H1 (cell line): ENCODE measurements at regions of chr14 and their contacts with region 1.

Region 1: GRCh38 chr14:51269634-51270033 is 29.6 kb downstream of the TMX1 start:
- DNase-seq: no peak
- H3K4me3 ChIP-seq: no peak overlapping the region
- H3K27ac ChIP-seq: no peak overlapping the region
- H3K4me1 ChIP-seq: no peaks in the 10 kb centered on the region
- H3K27me3 ChIP-seq: no peaks in the 10 kb centered on the region
- CTCF ChIP-seq: no peak
- EP300 ChIP-seq: no peak
- POLR2A ChIP-seq: no peak
- RAD21 ChIP-seq: no peak

Region 2: GRCh38 chr14:50846226-50846880 is 423.3 kb before region 1 on chr14:
- CTCF ChIA-PET with region 1: no interaction called
- POLR2A ChIA-PET with region 1: no interaction called
- DNase-seq: no peak
- H3K4me3 ChIP-seq: no peak overlapping the region
- H3K27ac ChIP-seq: no peak overlapping the region
- H3K4me1 ChIP-seq: no peaks in the 10 kb centered on the region
- H3K27me3 ChIP-seq: no peaks in the 10 kb centered on the region
- CTCF ChIP-seq: no peak
- EP300 ChIP-seq: no peak
- POLR2A ChIP-seq: no peak
- RAD21 ChIP-seq: no peak

Region 3: DNA sequence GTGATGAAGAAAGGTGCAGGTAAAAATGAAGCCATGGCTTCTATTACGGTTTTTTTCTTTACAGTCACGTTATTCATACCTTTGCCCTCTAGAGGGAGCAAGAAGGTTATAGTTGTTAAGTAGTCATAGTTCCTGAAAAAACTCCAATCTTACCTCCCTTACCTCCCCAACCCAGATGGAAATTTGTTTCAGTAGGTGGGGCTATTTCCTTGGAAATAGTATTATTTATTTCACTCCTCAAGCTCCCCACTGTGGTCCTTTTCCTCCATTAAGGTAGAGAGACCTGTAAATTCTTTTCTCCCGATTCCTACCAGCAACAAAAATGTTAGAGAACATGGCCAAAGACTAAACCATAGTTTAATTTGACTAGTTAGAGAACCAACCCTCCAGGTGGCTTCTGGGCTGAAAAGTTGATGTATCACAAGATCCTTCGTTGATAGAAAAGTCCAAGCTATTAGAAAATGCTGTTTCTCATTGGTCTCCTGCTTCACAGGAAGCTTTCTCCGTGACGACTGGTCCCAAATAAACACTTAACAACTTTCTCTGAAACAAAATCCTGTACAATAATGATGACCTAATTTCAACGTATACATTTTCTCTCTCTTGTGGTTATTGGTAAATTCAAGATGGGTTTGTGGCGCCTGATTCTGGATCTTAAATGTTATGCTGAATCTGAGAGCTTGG is 13.9 kb after region 1 on chr14:
- CTCF ChIA-PET with region 1: interaction called, 20 read pairs
- POLR2A ChIA-PET with region 1: no interaction called
- DNase-seq: no peak
- H3K4me3 ChIP-seq: no peak overlapping the region
- H3K27ac ChIP-seq: no peak overlapping the region
- H3K4me1 ChIP-seq: no peaks in the 10 kb centered on the region
- H3K27me3 ChIP-seq: no peaks in the 10 kb centered on the region
- CTCF ChIP-seq: peak in 2 of 3 experiments; percentile 72 to 76; a peak in 2 of 4 replicates
- EP300 ChIP-seq: no peak
- POLR2A ChIP-seq: no peak
- RAD21 ChIP-seq: peak; percentile 81 to 82

Region 4: DNA sequence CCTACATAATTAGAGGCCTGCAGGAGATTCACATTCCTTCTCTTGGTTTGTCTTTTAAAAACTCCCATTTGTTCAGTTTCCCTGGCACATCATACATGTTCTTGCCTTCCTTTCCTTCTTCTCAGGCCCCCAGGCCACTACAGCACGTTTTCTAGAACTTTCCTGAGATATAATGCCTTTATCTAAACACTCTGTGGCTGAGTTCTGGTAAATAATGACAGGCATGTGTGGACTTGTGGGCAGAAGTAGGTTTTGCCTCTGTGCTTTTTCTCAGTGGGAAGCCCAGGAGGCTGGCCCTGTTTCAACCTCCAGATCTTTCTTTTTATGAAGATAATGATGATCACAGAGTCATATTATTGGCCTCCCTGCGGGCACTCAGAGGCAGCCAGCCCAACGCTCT is 87.6 kb after region 1 on chr14:
- CTCF ChIA-PET with region 1: no interaction called
- POLR2A ChIA-PET with region 1: no interaction called
- DNase-seq: no peak
- H3K4me3 ChIP-seq: no peak overlapping the region
- H3K27ac ChIP-seq: no peak overlapping the region
- H3K4me1 ChIP-seq: no peaks in the 10 kb centered on the region
- H3K27me3 ChIP-seq: no peaks in the 10 kb centered on the region
- CTCF ChIP-seq: no peak
- EP300 ChIP-seq: no peak
- POLR2A ChIP-seq: no peak
- RAD21 ChIP-seq: no peak

Region 5: DNA sequence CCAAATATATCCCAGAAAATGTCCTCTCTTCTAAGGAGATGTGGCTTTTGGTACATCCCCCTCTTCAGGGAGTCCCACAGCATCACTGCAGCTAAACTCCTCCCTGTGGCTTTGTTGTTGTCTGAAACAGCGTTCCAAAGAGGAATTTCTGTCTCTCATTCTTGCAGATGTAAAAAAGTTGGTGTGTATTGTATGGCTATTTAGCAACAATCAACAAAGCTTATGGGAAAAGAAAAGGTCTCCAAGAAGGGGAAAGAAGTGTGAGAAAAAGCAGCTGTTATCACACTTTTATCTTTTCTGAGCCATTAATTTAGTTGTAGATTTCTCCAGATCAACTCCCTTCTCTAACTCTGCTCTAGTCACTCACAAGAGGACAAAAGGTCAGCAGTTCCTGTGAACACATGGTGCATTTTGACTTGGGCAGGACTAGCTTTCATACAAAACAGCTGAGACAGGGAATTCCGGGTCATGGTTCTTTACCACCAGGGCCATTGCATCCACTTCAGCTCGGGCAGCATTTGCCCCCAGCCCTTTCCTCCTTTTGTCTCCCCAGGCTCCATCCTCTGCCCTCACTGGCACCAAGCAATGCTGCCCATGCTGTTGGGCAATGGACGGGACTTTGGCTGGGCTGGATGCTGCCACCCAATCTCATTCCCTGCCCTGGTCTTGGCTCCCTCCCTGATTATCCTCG is 155.1 kb after region 1 on chr14:
- CTCF ChIA-PET with region 1: no interaction called
- POLR2A ChIA-PET with region 1: no interaction called
- DNase-seq: no peak
- H3K4me3 ChIP-seq: no peak overlapping the region
- H3K27ac ChIP-seq: no peak overlapping the region
- H3K4me1 ChIP-seq: peaks cover 0 to 4% (median 0%) of the 10 kb centered on the region in 4 experiments; a peak in 1 of 7 replicates
- H3K27me3 ChIP-seq: no peaks in the 10 kb centered on the region
- CTCF ChIP-seq: no peak
- EP300 ChIP-seq: no peak
- POLR2A ChIP-seq: no peak
- RAD21 ChIP-seq: no peak